ENCODE measurements at regions of chr6 and their contacts with region 1.

Region 1: DNA sequence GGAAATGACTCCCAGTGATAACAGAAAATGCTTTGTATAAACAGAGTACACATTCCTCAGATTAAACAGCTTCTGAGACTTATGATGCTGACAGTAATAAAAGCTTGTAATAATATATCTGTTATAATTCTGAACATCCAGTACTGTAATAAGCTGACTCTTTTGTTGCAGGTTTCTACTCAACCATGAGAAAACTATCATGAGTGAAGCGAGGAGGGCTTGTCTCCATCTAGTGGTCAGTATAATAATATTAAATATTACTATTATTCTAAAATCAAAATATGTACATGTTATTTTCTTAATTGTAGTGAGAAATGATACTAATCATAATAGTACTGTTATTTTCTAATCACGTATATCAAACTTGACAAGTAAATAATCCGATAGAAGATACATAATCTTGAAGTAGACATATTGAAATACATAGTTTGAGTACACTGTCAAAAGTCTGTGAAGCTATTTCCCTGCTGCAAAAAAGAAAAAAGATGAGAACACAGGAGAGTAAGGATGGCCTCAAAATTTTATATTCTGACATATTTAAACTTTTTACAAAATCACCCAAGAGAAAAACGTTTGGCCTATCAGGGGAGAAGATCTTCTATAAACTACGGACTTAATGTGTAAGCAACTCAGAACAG is 183.1 kb downstream of the MOXD1 start:
- DNase-seq: no peak
- H3K4me3 Mint-ChIP-seq: no peak overlapping the region
- H3K27ac Mint-ChIP-seq: no peak overlapping the region
- H3K4me1 Mint-ChIP-seq: no peaks in the 10 kb centered on the region
- H3K27me3 Mint-ChIP-seq: peaks cover 7% of the 10 kb centered on the region

Region 2: GRCh38 chr6:131923356-131923755 is 294.8 kb before region 1 on chr6:
- CTCF ChIA-PET with region 1: interaction called, 5 read pairs
- intact Hi-C with region 1: loop called (anchors 1 kb)
- DNase-seq: peak; percentile 73
- H3K4me3 Mint-ChIP-seq: no peak overlapping the region
- H3K27ac Mint-ChIP-seq: no peak overlapping the region
- H3K4me1 Mint-ChIP-seq: no peaks in the 10 kb centered on the region
- H3K27me3 Mint-ChIP-seq: peaks cover 18% of the 10 kb centered on the region

Region 3: DNA sequence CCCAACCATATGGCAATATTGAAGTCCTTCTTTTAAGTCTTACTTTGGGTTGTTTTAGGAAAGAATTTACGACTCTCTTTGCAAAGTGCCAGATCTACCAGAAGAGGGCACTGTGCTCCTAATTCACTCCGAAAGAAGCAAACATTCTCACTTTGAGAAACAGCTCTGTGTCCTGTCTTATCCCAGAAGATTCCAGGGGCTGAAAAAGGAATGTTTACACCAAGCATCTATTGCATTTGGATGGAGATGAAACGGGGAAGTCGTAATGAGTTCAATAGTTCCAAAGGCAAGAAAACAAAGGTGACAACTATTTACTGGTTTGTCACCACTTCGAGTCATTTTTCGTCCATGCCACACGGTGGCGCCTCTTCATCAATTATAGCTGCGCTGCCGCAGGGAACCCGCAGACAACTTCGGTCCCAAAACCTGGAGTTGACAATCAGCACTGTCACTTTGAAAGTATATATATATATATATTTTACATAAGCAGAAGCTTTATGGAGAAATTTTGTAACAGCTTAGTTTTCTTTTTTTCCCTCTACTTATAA is 61.5 kb after region 1 on chr6:
- CTCF ChIA-PET with region 1: no interaction called
- intact Hi-C with region 1: no loop called
- DNase-seq: peak; percentile 78
- H3K4me3 Mint-ChIP-seq: peak overlapping the region; percentile 64
- H3K27ac Mint-ChIP-seq: no peak overlapping the region
- H3K4me1 Mint-ChIP-seq: no peaks in the 10 kb centered on the region
- H3K27me3 Mint-ChIP-seq: peaks cover 14% of the 10 kb centered on the region

Region 4: DNA sequence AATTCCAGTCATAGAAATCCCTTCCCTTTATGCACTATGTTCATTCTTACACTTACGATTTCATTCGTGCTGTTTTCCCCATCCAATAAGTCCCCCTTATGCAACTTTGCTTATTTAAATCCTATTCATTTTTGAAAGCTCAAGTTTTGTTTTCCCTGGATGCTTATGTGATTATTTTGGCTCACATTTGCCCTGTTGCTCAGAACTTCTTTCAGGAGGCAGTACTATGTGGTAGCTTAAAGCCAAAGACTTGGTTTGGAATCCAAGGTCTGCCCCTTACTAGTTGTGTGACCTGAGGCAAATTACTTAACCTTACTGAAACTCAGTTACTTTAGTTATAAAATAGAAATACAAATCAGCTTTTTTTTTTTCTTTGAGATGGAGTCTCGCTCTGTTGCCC is 123.5 kb after region 1 on chr6:
- CTCF ChIA-PET with region 1: no interaction called
- intact Hi-C with region 1: no loop called
- DNase-seq: no peak
- H3K4me3 Mint-ChIP-seq: no peak overlapping the region
- H3K27ac Mint-ChIP-seq: no peak overlapping the region
- H3K4me1 Mint-ChIP-seq: no peaks in the 10 kb centered on the region
- H3K27me3 Mint-ChIP-seq: peaks cover 24% of the 10 kb centered on the region

Region 5: DNA sequence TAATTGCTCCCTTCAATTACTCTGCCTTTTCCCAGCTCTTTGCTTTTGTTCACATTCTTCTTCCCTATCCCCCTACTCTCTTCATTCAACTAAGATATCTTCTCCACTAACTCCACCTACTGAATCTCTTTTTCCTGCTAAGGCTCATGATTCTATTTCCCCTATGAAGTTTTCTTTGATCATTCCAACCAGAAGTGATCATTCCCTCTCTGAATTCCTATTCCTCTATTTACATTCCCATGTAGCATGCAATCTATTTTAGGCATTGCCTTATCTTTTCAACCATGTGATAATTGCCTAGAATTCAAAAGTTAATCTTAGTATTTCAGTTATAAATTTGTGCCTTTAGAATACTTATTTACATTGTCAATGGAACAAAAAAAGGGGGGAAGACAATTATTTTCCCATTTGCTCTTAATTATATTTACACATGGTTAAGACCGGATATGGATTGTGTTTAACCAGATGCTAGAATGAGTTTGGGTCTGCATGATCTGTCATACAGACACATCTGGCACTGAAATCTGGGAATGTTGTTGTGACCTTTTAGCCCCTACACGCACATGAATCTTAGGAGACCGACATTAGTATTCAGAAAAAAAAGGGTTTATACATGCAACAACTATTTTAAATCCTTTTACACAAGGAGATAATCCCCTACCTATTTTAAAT is 162.3 kb after region 1 on chr6:
- CTCF ChIA-PET with region 1: no interaction called
- intact Hi-C with region 1: no loop called
- DNase-seq: no peak
- H3K4me3 Mint-ChIP-seq: no peak overlapping the region
- H3K27ac Mint-ChIP-seq: no peak overlapping the region
- H3K4me1 Mint-ChIP-seq: no peaks in the 10 kb centered on the region
- H3K27me3 Mint-ChIP-seq: peaks cover 41% of the 10 kb centered on the region

Measured in activated naive CD4-positive, alpha-beta T cell treated with anti-CD3 and anti-CD28 coated beads for 36 hours (primary cell).